Mammary epithelial cell (primary cell): ENCODE measurements at regions of chr7 and their contacts with region 1.

Region 1: DNA sequence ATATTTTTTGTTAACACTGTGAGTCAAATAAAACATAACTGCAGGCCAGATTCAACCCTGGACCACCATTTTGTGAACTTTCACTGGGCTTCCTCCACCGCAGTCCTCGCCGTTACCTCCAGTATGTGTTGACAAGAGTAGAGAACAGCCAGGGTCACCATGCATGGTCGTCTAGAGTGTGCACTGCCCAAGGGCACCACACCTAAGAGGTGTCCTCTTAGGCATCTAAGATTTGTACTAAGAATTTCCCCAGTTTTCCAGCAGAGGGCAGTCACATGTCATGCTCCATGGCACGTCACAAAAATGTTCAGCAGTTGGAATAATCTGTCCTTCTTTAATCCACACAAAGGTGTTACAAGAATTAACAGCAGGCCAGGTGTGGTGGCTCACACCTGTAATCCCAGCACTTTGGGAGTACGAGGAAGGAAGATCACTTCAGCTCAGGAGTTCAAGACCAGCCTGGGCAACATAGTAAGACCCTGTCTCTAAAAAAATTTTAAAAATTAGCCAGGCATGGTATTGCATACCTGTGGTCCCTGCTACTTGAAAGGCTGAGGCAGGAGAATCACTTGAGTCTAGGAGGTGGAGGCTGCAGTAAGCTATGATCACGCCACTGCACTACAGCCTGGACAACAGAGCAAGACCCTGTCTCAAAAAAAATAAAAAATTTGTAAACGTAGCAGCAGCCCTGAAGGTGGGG is 71.2 kb upstream of the FOXK1 start:
- DNase-seq: peak; percentile 60
- H3K4me3 ChIP-seq: no peak overlapping the region
- H3K27ac ChIP-seq: no peak overlapping the region
- H3K4me1 ChIP-seq: no peaks in the 10 kb centered on the region
- H3K27me3 ChIP-seq: no peaks in the 10 kb centered on the region
- CTCF ChIP-seq: peak; percentile 76 to 79

Region 2: GRCh38 chr7:4531236-4531635 is 79.7 kb before region 1 on chr7:
- CTCF ChIA-PET with region 1: no interaction called
- dilution Hi-C with region 1: no loop called
- in situ Hi-C with region 1: no loop called
- intact Hi-C with region 1: no loop called
- DNase-seq: no peak
- H3K4me3 ChIP-seq: no peak overlapping the region
- H3K27ac ChIP-seq: no peak overlapping the region
- H3K4me1 ChIP-seq: no peaks in the 10 kb centered on the region
- H3K27me3 ChIP-seq: no peaks in the 10 kb centered on the region
- CTCF ChIP-seq: no peak

Region 3: DNA sequence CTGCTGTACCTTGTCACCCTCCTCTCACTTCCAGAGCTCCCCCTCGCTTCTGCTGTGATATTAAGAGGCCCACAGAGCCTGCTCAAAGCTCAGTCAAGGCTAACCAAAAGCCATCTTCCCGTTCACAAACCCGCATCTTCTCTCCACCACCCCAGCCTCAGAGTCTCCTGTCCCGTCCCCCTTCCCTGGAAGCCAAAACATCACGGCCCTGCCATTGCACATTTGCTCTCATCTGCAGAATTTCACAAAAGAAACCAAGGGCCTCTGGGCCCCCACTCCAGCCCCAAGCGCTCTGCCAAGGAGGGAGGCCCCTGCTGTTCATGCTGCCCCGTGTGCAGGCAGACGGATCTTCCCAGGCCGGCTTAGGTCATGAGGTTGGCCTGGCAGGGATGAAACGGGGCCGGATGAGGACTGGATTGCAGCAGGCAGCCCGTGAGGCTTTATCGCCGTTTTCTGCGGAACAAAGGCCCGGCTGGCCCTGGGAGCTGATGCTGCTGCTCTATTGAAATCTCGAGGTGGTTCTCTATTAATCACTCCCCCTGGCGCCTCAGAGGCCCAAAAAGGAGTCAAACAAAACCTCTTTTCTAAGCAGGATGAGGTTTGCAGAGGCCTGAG is 39.6 kb after region 1 on chr7:
- CTCF ChIA-PET with region 1: no interaction called
- dilution Hi-C with region 1: no loop called
- in situ Hi-C with region 1: no loop called
- intact Hi-C with region 1: no loop called
- DNase-seq: no peak
- H3K4me3 ChIP-seq: no peak overlapping the region
- H3K27ac ChIP-seq: no peak overlapping the region
- H3K4me1 ChIP-seq: no peaks in the 10 kb centered on the region
- H3K27me3 ChIP-seq: no peaks in the 10 kb centered on the region
- CTCF ChIP-seq: no peak

Region 4: GRCh38 chr7:4753711-4754432 is 143.0 kb after region 1 on chr7:
- CTCF ChIA-PET with region 1: no interaction called
- dilution Hi-C with region 1: no loop called
- in situ Hi-C with region 1: no loop called
- intact Hi-C with region 1: loop called (anchors 1 kb)
- DNase-seq: peak; percentile 59
- H3K4me3 ChIP-seq: no peak overlapping the region
- H3K27ac ChIP-seq: no peak overlapping the region
- H3K4me1 ChIP-seq: no peaks in the 10 kb centered on the region
- H3K27me3 ChIP-seq: no peaks in the 10 kb centered on the region
- CTCF ChIP-seq: peak; percentile 84 to 95

Region 5: GRCh38 chr7:4883374-4884144 is 272.6 kb after region 1 on chr7 and contains the start of gene RADIL:
- CTCF ChIA-PET with region 1: no interaction called
- dilution Hi-C with region 1: no loop called
- in situ Hi-C with region 1: no loop called
- intact Hi-C with region 1: loop called (anchors 10 kb)
- DNase-seq: peak; percentile 70
- H3K4me3 ChIP-seq: peak within 1 kb of the TSS in 1 of 3 experiments; percentile 28
- H3K27ac ChIP-seq: no peak within 1 kb of the TSS
- H3K4me1 ChIP-seq: peaks cover 10% of the 10 kb centered on the region
- H3K27me3 ChIP-seq: peaks cover 9% of the 10 kb centered on the region
- CTCF ChIP-seq: peak in 1 of 2 donors; percentile 31
- total RNA-seq, gene RADIL: 0.17 to 0.28 TPM

Region 6: DNA sequence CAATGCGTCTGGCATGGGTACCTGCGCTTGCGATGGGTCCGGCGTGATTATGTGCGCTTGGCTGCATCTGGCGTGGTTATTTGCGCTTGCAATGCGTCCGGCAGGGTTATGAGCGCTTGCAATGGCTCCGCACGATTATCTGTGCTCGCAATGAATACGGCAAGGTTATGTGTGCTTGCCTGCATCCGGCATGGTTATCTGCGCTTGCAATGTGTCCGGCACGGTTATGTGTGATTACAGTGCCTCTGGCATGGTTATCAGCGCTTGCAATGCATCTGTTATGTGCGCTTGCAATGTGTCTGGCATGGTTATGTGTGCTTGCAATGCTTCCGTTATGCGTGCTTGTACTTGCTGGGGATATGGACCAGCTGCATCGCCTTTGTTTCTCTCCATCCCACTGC is 472.4 kb after region 1 on chr7:
- CTCF ChIA-PET with region 1: no interaction called
- dilution Hi-C with region 1: no loop called
- in situ Hi-C with region 1: no loop called
- intact Hi-C with region 1: loop called (anchors 1 kb)
- DNase-seq: no peak
- H3K4me3 ChIP-seq: no peak overlapping the region
- H3K27ac ChIP-seq: no peak overlapping the region
- H3K4me1 ChIP-seq: no peaks in the 10 kb centered on the region
- H3K27me3 ChIP-seq: no peaks in the 10 kb centered on the region
- CTCF ChIP-seq: no peak